ENCODE measurements at regions of chr5 and their contacts with region 1.

Region 1: GRCh38 chr5:87267574-87268125 is at the start of gene RASA1:
- DNase-seq: peak; percentile 96 to 97 (median 96)
- ATAC-seq: peak; percentile 85
- H3K4me3 ChIP-seq: peak within 1 kb of the TSS; percentile 87
- H3K27ac ChIP-seq: peak within 1 kb of the TSS; percentile 88
- H3K4me1 ChIP-seq: peaks cover 6 to 14% of the 10 kb centered on the region in 2 experiments; a peak in 2 of 5 replicates
- H3K27me3 ChIP-seq: no peaks in the 10 kb centered on the region
- CTCF ChIP-seq: no peak; a peak in 1 of 6 replicates
- EP300 ChIP-seq: no peak
- POLR2A ChIP-seq: peak; percentile 96
- RAD21 ChIP-seq: no peak
- polyA plus RNA-seq, gene RASA1: 3.2 to 4.5 TPM

Region 2: DNA sequence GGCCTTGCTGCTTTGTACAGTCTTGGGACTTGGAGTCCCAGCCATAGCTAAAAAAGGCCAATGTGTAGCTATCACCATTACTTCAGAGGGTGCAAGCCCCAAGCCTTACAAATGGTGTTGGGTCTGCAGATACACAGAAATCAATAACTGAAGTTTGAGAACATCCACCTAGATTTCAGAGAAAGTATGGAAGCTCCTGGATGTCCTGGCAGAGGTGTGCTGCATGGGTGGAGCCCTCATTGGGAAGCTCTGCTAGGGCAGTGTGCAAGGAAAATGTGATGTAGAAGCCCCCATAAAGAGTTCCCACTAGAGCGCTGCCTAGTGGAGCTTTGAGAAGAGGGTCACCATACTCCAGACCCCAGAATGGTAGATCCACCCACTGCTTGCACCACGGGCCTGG is 1276.7 kb before region 1 on chr5:
- CTCF ChIA-PET with region 1: no interaction called
- POLR2A ChIA-PET with region 1: no interaction called
- in situ Hi-C with region 1: no loop called
- intact Hi-C with region 1: no loop called
- DNase-seq: no peak
- ATAC-seq: no peak
- H3K4me3 ChIP-seq: no peak overlapping the region
- H3K27ac ChIP-seq: no peak overlapping the region
- H3K4me1 ChIP-seq: no peaks in the 10 kb centered on the region
- H3K27me3 ChIP-seq: no peaks in the 10 kb centered on the region
- CTCF ChIP-seq: no peak
- EP300 ChIP-seq: no peak
- POLR2A ChIP-seq: no peak
- RAD21 ChIP-seq: no peak

Region 3: DNA sequence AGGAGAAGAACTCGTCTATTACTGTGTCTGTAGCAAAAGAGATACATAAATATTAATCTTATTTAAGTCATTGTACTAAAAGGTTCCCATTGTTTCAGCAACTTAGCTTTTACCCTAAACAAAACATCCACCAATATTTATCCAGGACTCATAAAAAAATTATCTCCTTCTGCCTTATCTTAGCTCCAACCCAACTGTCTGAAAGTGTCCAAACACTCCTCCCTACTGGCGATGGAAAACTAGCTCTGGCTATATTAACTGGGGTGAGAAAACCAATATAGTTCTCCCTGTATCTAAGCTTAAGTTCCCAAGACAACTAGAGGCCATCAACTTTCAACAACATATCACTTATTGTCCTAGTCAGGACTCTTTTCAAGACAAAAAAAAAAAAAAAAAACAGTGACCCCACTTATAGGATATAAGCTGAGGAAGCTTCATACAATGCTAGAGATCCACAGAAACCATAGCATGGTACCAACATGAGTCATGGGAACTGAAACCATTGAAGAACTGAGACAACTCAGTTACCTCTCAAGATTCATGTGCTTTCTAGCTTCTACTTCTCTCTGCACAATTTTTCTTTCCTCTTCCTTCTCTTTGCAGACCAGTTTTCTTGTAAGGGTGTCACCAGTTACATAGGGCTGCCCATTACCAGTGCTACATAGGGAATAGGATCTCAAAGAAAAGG is 150.7 kb before region 1 on chr5:
- CTCF ChIA-PET with region 1: no interaction called
- POLR2A ChIA-PET with region 1: no interaction called
- in situ Hi-C with region 1: no loop called
- intact Hi-C with region 1: loop called (anchors 10 kb)
- DNase-seq: peak in 1 of 4 experiments; percentile 26
- ATAC-seq: peak; percentile 43
- H3K4me3 ChIP-seq: no peak overlapping the region
- H3K27ac ChIP-seq: peak overlapping the region; percentile 56
- H3K4me1 ChIP-seq: peaks cover 7 to 62% of the 10 kb centered on the region in 2 experiments
- H3K27me3 ChIP-seq: no peaks in the 10 kb centered on the region
- CTCF ChIP-seq: peak in 1 of 3 experiments; percentile 20; a peak in 1 of 6 replicates
- EP300 ChIP-seq: peak; percentile 52; the same call in 1 of the 2 replicates
- POLR2A ChIP-seq: no peak
- RAD21 ChIP-seq: peak in 1 of 2 experiments; percentile 33; a peak in 2 of 4 replicates

Region 4: DNA sequence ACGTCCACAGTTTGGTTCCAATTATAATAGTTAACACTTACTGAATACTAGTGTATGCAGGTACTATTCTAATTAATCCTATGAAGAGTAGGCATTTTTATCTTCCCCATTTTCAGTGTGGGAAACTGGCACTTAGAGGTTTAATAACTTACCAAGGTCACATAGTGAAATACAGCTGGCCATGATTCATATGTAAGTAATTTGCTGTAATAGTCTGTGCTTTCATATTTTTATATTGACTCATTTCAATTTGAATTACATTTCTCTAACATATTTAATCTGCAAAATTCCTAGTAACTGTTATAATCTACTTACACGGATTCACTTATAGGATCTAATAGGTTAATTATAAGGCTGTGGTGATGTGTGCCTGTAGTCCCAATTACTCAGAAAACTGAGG is 125.7 kb after region 1 on chr5:
- CTCF ChIA-PET with region 1: no interaction called
- POLR2A ChIA-PET with region 1: no interaction called
- in situ Hi-C with region 1: no loop called
- intact Hi-C with region 1: loop called (anchors 10 kb)
- DNase-seq: no peak
- ATAC-seq: no peak
- H3K4me3 ChIP-seq: no peak overlapping the region
- H3K27ac ChIP-seq: no peak overlapping the region
- H3K4me1 ChIP-seq: no peaks in the 10 kb centered on the region
- H3K27me3 ChIP-seq: no peaks in the 10 kb centered on the region
- CTCF ChIP-seq: no peak
- EP300 ChIP-seq: no peak
- POLR2A ChIP-seq: no peak
- RAD21 ChIP-seq: no peak

Region 5: GRCh38 chr5:87412630-87413342 is 145.1 kb after region 1 on chr5 and contains the start of gene CCNH:
- CTCF ChIA-PET with region 1: no interaction called
- POLR2A ChIA-PET with region 1: no interaction called
- in situ Hi-C with region 1: no loop called
- intact Hi-C with region 1: loop called (anchors 2 kb)
- DNase-seq: peak; percentile 94 to 99 (median 95)
- ATAC-seq: peak; percentile 98
- H3K4me3 ChIP-seq: peak within 1 kb of the TSS; percentile 98
- H3K27ac ChIP-seq: peak within 1 kb of the TSS; percentile 98
- H3K4me1 ChIP-seq: peaks cover 0 to 6% of the 10 kb centered on the region in 2 experiments; a peak in 2 of 5 replicates
- H3K27me3 ChIP-seq: no peaks in the 10 kb centered on the region
- CTCF ChIP-seq: no peak
- EP300 ChIP-seq: peak; percentile 40
- POLR2A ChIP-seq: peak; percentile 92
- RAD21 ChIP-seq: no peak
- polyA plus RNA-seq, gene CCNH: 208 to 213 TPM

Measured in K562 (cell line).